Right ventricle myocardium inferior (tissue), 1 donor: ENCODE measurements at regions of chr5 and their contacts with region 1.

Region 1: GRCh38 chr5:87412630-87413342 is at the start of gene CCNH:
- DNase-seq: peak; percentile 98
- ATAC-seq: peak; percentile 100
- total RNA-seq, gene CCNH: 18.4 TPM

Region 2: GRCh38 chr5:87267574-87268125 is 145.1 kb before region 1 on chr5 and contains the start of gene RASA1:
- intact Hi-C with region 1: loop called (anchors 5 kb)
- DNase-seq: peak; percentile 96
- ATAC-seq: peak; percentile 99
- total RNA-seq, gene RASA1: 19.8 TPM

Region 3: DNA sequence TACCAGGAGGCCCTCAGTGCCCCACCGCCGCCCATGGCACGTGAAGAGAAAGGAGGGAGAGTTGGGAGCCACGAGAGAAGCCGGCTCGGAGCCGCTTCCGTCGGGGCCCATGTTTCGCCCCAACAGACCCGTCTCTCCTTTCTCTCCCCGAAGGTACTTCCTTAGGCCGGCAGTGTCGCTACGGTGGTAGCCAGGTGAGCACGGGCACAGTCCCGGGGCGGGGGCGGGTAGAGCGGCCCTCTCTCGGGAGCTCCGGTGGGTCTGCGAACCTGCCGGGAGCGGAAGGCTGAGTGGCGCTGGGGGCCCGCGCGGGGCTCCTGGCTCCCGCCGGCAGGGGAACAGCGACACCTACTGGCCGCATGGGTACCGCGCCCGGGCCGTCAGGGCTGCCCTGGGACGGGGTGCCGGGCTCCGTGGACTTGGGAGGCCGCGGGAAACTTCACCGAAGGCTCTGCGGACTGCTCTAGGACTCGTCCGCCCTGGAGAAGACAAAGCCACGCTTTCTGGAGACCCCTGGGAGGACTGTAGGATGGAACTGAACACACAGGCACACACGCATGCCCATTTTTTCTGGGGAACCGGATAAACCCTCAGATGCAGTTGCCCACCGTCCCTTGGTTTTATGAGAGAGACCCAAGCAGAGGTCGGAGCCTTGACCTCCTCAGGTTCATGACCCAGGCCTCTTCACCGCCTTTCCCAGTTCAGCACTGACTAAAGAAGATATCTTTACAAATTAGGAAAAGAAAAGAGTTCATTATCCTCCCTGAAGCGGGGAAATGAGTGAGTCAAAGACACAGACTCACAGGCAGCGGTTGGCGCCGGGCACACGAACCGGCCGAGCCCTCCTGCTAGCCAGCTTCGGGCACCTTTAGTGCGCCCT is 1267.7 kb after region 1 on chr5:
- intact Hi-C with region 1: loop called (anchors 10 kb)
- DNase-seq: peak; percentile 82
- ATAC-seq: peak; percentile 82